CD14-positive monocyte (primary cell): ENCODE measurements at regions of chr12 and their contacts with region 1.

Region 1: DNA sequence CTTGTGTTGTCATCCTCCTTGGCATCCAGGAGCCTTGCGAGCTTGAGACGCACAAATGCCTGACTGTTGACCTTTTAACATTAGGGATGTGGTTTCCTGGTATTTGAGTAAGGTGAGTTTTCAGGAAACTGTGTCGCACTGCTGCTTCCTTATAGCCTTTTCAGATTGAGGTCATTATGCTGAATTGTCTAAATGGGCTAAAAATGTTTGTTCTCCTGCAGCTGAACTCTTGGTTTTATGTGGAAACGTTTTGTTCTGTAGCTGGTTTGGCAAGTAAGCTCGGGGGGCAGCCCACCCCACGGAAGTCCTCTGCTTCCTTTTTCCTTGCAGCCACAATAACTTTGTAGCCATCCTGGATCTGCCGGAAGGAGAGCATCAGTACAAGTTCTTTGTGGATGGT is 5.7 kb downstream of the PRKAB1 start:
- DNase-seq: no peak
- H3K4me3 ChIP-seq: no peak overlapping the region
- H3K4me3 Mint-ChIP-seq: no peak overlapping the region
- H3K27ac ChIP-seq: peak overlapping the region in 1 of 2 donors; percentile 11
- H3K27ac Mint-ChIP-seq: peak overlapping the region in 1 of 7 donors; percentile 80
- H3K4me1 ChIP-seq: peaks cover 4 to 24% of the 10 kb centered on the region in 2 donors
- H3K4me1 Mint-ChIP-seq: peaks cover 37% of the 10 kb centered on the region
- H3K27me3 ChIP-seq: no peaks in the 10 kb centered on the region
- H3K27me3 Mint-ChIP-seq: no peaks in the 10 kb centered on the region
- CTCF ChIP-seq: no peak

Region 2: GRCh38 chr12:119659289-119659897 is 14.2 kb before region 1 on chr12:
- intact Hi-C with region 1: loop called in 1 of 2 experiments (anchors 2 kb)
- DNase-seq: peak; percentile 25 to 69 (median 34)
- H3K4me3 ChIP-seq: peak overlapping the region in 1 of 3 experiments; percentile 48
- H3K4me3 Mint-ChIP-seq: no peak overlapping the region
- H3K27ac ChIP-seq: peak overlapping the region in 1 of 2 donors; percentile 73
- H3K27ac Mint-ChIP-seq: peak overlapping the region in 4 of 7 donors; percentile 58 to 80 (median 71)
- H3K4me1 ChIP-seq: peaks cover 9 to 11% of the 10 kb centered on the region in 2 donors
- H3K4me1 Mint-ChIP-seq: peaks cover 8% of the 10 kb centered on the region
- H3K27me3 ChIP-seq: no peaks in the 10 kb centered on the region
- H3K27me3 Mint-ChIP-seq: peaks cover 0 to 3% (median 0%) of the 10 kb centered on the region in 3 donors
- CTCF ChIP-seq: peak; percentile 99

Region 3: DNA sequence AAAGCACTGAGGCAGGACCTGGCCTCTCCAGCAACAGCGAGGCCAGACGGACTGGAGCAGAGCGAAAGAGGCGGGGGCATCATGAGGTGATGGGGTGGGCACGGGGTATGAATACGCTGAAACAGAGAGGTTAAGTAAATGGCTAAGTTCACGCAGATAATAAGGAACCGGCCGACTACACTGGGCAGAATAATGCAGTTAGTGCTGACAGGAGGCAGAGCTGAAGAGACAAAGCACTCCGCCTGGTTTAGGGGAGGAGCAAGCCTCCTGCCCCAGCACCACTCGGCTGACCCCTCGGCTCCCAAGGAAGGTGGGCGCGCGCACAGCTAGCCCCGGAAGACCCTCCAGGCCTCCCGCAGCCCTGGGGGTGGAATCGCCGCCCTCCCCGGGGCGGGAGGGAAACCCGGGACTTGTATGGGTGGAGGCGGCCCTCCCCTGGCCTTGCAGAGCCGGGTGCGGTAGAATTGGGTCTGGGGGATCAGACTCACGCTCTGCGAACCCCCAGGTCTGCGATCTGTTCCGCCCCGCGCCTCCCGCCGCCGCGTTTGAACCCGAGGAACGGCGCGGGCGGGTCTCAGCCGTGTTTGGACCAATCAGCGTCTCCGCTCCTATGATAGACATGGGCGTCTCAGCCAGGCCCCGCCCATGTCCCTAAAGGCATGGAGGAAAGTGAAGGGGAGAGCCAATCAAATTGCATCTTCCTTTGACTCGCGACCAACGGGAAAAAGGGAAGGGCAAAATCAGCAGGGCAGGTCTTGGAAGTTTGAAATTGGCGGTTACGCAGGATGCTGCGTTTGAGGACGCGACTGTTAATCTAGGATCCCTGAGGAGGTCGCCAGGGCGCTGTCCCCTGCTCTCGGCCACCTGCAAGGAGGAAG is 203.4 kb after region 1 on chr12 and contains the start of gene CIT:
- intact Hi-C with region 1: loop called in 1 of 2 experiments (anchors 10 kb)
- DNase-seq: peak; percentile 88 to 93 (median 90)
- H3K4me3 ChIP-seq: peak within 1 kb of the TSS; percentile 75 to 97 (median 94)
- H3K4me3 Mint-ChIP-seq: peak within 1 kb of the TSS; percentile 87 to 96
- H3K27ac ChIP-seq: peak within 1 kb of the TSS in 1 of 2 donors; percentile 40
- H3K27ac Mint-ChIP-seq: peak within 1 kb of the TSS in 4 of 7 donors; percentile 62 to 83 (median 76)
- H3K4me1 ChIP-seq: peaks cover 14 to 18% of the 10 kb centered on the region in 2 donors
- H3K4me1 Mint-ChIP-seq: peaks cover 16% of the 10 kb centered on the region
- H3K27me3 ChIP-seq: peaks cover 2 to 4% of the 10 kb centered on the region in 2 donors
- H3K27me3 Mint-ChIP-seq: peaks cover 2 to 14% (median 7%) of the 10 kb centered on the region in 3 donors
- CTCF ChIP-seq: no peak
- polyA plus RNA-seq, gene CIT: 0.03 TPM in 1 of 3 donors, not detected in the others

Region 4: DNA sequence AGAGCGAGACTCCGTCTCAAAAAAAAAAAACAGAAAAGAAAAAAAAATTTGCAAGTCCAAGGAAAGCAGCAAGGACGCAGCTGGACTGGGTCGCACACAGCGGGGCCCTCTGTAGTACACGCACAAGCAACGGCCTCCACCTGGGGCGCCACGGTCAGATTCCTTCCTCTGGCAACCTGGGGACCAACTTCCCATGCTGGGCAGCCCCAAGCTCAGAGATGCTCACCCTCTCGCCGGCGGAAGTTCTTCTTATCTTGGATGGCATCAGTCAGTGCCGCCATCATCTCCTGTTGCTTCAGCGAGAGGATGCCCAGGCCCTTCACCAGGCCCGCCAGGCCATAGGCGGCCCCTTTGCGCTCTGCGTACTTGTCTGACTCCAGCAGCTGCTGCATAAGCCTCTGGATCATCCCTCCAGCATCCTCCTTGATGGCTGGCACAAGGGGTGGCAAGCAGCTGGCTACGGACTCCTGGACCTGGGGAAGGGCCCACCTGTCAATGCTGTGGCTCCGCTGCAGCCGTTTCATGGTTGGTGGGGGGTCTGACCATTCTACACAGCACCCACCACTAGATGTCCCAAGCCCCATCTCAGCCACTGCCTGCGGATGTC is 477.4 kb after region 1 on chr12:
- intact Hi-C with region 1: no loop called
- DNase-seq: no peak
- H3K4me3 ChIP-seq: no peak overlapping the region
- H3K4me3 Mint-ChIP-seq: no peak overlapping the region
- H3K27ac ChIP-seq: no peak overlapping the region
- H3K27ac Mint-ChIP-seq: no peak overlapping the region
- H3K4me1 ChIP-seq: no peaks in the 10 kb centered on the region
- H3K4me1 Mint-ChIP-seq: no peaks in the 10 kb centered on the region
- H3K27me3 ChIP-seq: no peaks in the 10 kb centered on the region
- H3K27me3 Mint-ChIP-seq: no peaks in the 10 kb centered on the region
- CTCF ChIP-seq: no peak